ENCODE measurements at regions of chr9 and their contacts with region 1.

Region 1: GRCh38 chr9:78261403-78262001 is 25.6 kb downstream of the CEP78 start:
- DNase-seq: no peak
- H3K4me3 ChIP-seq: no peak overlapping the region
- H3K27ac ChIP-seq: no peak overlapping the region
- H3K4me1 ChIP-seq: no peaks in the 10 kb centered on the region
- H3K27me3 ChIP-seq: no peaks in the 10 kb centered on the region
- CTCF ChIP-seq: peak; percentile 43 to 85 (median 44)
- POLR2A ChIP-seq: no peak

Region 2: DNA sequence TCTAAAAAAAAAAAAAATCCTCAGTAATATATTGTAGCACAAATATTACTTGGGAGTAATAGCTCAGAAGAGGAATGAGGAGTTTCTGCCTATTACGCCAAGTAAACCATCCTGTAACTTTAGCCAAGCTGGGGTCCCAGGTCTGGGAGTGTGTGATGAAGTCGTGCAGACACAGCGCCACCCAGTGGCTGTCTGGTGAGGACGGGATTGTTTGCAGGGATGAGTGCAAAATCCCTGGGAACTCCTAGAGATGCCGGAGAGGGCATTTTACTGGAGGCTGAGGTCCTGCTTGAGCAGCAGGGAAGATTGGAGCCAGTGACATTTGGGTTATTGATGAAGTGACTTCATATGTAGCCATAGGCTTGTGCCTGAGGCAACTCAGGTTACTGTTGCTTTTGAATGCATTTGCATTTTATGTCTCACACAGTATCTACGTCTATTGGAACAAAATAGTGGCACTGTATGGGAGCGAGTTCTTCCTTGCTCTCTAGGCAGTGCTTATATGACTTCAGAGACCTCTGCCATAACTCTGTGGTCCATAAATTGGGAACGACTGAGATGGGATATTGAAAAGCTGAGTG is 108.2 kb after region 1 on chr9:
- intact Hi-C with region 1: loop called (anchors 5 kb)
- DNase-seq: peak; percentile 92
- H3K4me3 ChIP-seq: no peak overlapping the region
- H3K27ac ChIP-seq: no peak overlapping the region
- H3K4me1 ChIP-seq: no peaks in the 10 kb centered on the region
- H3K27me3 ChIP-seq: no peaks in the 10 kb centered on the region
- CTCF ChIP-seq: peak; percentile 51 to 86 (median 74)
- POLR2A ChIP-seq: no peak